Activated T-helper 1 cell treated with anti-CD3 and anti-CD28 coated beads, Interleukin-12 subunit alpha, Interleukin-12 subunit beta, Interleukin-2, Interleukin-4 antibody, amounts not matched to agents 30 ng/mL and 10 ng/mL and 1 ng/mL, durations not matched to agents 14 hours and 24 hours and 36 hours (primary cell): ENCODE measurements at regions of chr2 and their contacts with region 1.

Region 1: DNA sequence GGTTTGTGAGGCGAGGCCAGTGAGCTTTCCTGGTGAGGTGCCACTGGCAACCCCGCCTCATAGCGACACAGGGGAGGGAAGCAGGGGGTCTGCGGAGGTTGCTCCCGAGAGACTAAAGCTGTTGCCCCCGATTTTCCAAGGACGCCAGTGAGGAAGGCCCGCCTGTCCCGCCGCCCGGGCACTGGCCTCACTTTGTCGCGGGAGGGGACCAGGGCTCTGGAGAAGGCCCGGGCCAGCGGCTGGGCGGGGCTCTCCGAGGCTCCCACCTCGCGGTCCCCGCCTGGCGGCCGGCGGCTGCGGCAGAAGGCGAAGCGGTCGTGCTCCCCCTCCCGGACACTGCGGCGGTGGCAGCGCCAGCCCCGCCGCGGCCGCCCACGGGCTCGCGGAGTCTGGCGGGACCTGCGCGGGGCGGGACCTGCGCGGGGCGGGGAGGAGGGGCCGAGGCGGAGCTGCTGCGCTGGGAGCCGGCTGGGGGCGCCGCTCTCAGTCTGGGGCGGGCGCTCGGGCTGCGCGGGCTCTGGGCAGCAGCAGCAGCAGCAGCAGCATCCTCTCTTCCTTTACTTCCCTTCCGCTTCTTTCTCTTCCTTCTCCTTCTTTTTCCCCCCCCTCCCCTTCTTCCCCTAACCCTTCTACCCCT is at the start of gene MAP2:
- DNase-seq: peak; percentile 63
- H3K4me3 Mint-ChIP-seq: peak within 1 kb of the TSS; percentile 76
- H3K27ac Mint-ChIP-seq: no peak within 1 kb of the TSS
- H3K4me1 Mint-ChIP-seq: peaks cover 14% of the 10 kb centered on the region
- H3K27me3 Mint-ChIP-seq: peaks cover 20% of the 10 kb centered on the region
- total RNA-seq, gene MAP2: not detected in 2 replicates

Region 2: DNA sequence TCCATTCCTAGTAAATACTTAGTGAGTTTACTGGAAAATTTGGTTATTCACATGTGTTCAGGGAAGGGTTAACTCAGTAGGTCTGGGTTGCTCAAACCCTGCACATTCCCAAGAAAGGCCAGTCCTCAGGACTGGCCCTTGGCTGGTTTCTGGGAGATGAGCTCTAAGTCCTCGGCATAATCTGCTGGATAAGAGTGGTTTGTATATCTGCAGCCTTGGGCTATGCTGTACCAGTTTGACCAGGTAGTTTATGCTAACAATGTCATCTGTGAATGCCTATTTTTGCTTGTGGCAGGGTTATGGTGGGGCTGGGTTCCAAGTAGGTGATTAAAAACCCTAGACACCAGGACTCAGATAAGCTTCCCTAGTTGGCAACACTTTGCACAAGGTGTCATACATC is 1024.5 kb before region 1 on chr2:
- intact Hi-C with region 1: loop called (anchors 5 kb)
- DNase-seq: no peak
- H3K4me3 Mint-ChIP-seq: no peak overlapping the region
- H3K27ac Mint-ChIP-seq: no peak overlapping the region
- H3K4me1 Mint-ChIP-seq: peaks cover 5% of the 10 kb centered on the region
- H3K27me3 Mint-ChIP-seq: peaks cover 28% of the 10 kb centered on the region

Region 3: DNA sequence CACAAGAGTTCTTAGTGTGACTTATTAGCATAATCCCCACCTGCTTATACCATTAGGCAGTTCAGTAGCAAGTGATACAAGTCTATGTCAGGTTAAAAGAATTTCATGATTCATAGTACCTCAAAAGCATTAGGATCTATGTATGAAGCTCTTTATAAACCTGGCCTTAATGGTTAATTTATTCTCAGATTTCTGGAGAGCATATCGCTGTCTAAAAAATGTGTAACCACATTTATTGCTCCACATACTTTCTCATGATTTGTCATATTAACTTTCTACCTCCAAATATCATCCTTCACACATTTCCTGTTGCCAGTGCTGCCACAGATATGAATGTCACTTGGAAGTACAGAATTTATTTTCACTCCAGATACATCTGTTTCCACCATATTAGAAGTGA is 332.6 kb before region 1 on chr2:
- intact Hi-C with region 1: no loop called
- DNase-seq: no peak
- H3K4me3 Mint-ChIP-seq: no peak overlapping the region
- H3K27ac Mint-ChIP-seq: no peak overlapping the region
- H3K4me1 Mint-ChIP-seq: no peaks in the 10 kb centered on the region
- H3K27me3 Mint-ChIP-seq: no peaks in the 10 kb centered on the region